Right cardiac atrium (tissue), 5 donors: ENCODE measurements at regions of chrX and their contacts with region 1.

Region 1: GRCh38 chrX:57241967-57242366 is 44.5 kb upstream of the FAAH2 start:
- DNase-seq: no peak
- ATAC-seq: no peak
- H3K4me3 ChIP-seq: no peak overlapping the region
- H3K27ac ChIP-seq: no peak overlapping the region
- H3K4me1 ChIP-seq: no peaks in the 10 kb centered on the region
- H3K27me3 ChIP-seq: no peaks in the 10 kb centered on the region

Region 2: GRCh38 chrX:57227691-57228090 is 14.3 kb before region 1 on chrX:
- intact Hi-C with region 1: loop called in 1 of 4 experiments (anchors 2 kb)
- DNase-seq: no peak
- ATAC-seq: no peak
- H3K4me3 ChIP-seq: no peak overlapping the region
- H3K27ac ChIP-seq: no peak overlapping the region
- H3K4me1 ChIP-seq: no peaks in the 10 kb centered on the region
- H3K27me3 ChIP-seq: no peaks in the 10 kb centered on the region

Region 3: DNA sequence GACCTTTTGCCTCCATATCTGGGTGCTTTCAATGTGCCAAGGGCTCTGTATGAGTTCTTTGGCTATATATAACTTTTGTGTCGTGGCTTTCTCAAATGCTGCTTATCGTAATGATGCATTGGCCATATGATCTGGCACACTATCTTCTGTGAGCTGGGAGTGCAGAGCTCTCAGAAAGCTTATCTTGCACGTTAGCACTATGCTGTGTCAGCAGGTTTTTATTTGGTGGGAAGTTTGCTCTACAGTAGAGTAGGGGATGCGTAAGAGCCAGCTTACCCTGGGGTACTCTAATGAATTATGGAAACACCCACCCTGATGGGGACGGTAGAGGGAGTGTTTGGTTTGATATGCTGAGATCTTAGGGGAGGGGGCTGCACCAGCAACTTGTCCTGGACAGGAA is 164.2 kb after region 1 on chrX:
- intact Hi-C with region 1: no loop called
- DNase-seq: no peak
- ATAC-seq: no peak
- H3K4me3 ChIP-seq: no peak overlapping the region
- H3K27ac ChIP-seq: no peak overlapping the region
- H3K4me1 ChIP-seq: no peaks in the 10 kb centered on the region
- H3K27me3 ChIP-seq: no peaks in the 10 kb centered on the region